Right ventricle myocardium superior (tissue), 1 donor: ENCODE measurements at regions of chr19 and their contacts with region 1.

Region 1: GRCh38 chr19:1020868-1021425 is at the start of gene TMEM259:
- DNase-seq: peak; percentile 99
- ATAC-seq: peak; percentile 92
- total RNA-seq, gene TMEM259: 109 TPM

Region 2: GRCh38 chr19:1103708-1104310 is 82.9 kb after region 1 on chr19 and contains the start of gene GPX4:
- intact Hi-C with region 1: loop called (anchors 5 kb)
- DNase-seq: peak; percentile 100
- ATAC-seq: peak; percentile 87
- total RNA-seq, gene GPX4: 345 TPM

Region 3: GRCh38 chr19:1239798-1240737 is 219.1 kb after region 1 on chr19:
- intact Hi-C with region 1: loop called (anchors 10 kb)
- DNase-seq: peak; percentile 93
- ATAC-seq: peak; percentile 55